HCT116 (cell line): ENCODE measurements at regions of chr11 and their contacts with region 1.

Region 1: GRCh38 chr11:57761301-57762234 is at the start of gene CTNND1:
- DNase-seq: peak; percentile 95
- ATAC-seq: peak; percentile 97
- H3K4me3 ChIP-seq: peak within 1 kb of the TSS; percentile 81 to 93
- H3K27ac ChIP-seq: peak within 1 kb of the TSS; percentile 83
- H3K4me1 ChIP-seq: peaks cover 15 to 28% of the 10 kb centered on the region in 2 experiments; a peak in 3 of 4 replicates
- H3K27me3 ChIP-seq: no peaks in the 10 kb centered on the region
- CTCF ChIP-seq: 0 out of 6 replicates have a peak, but pooled peaks of 1 of the 3 experiments have one; percentile 3
- POLR2A ChIP-seq: peak; percentile 78
- RAD21 ChIP-seq: peak; percentile 15
- total RNA-seq, gene CTNND1: 157 TPM

Region 2: DNA sequence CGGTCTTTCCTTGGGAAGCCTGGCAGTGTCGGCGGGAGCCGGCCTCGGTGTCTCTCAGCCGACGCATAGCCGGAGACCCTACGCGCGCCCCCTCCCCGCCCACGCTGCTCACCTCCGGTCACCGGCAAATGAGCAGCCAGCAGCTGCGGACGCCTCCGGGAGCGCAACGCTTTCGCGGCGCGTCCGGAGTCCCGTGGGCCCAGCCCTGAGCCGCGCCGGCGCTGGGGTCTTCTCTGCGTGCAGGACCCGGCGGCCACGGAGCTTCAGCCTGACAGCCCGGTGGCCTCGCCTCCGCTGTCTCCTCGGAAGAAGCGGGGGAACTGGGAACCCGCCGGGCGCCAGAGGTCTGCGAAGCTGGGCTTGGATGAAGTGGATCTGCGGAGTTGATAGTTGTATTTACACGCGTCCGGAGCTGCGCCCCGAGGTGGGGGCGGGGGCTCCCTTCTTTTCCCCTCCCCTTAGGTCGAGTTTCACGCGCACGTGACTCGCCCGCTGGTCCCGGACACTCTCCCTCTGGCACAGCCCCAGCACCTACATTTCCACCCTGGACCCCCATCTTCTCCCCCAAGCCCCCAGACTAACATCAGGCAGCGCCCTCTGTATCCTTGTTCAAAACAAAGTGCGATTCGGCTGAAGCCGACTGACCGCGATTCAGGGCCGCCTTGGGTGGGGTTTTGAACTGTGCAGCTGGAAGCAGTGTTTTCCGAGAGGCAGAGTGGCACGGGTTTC is 246.1 kb before region 1 on chr11 and contains the start of gene SLC43A1:
- CTCF ChIA-PET with region 1: no interaction called
- POLR2A ChIA-PET with region 1: no interaction called
- RAD21 ChIA-PET with region 1: no interaction called
- intact Hi-C with region 1: no loop called
- DNase-seq: no peak
- ATAC-seq: peak; percentile 84
- H3K4me3 ChIP-seq: peak within 1 kb of the TSS; percentile 70 to 73
- H3K27ac ChIP-seq: peak within 1 kb of the TSS; percentile 45; the same call in 1 of the 2 replicates
- H3K4me1 ChIP-seq: peaks cover 3 to 15% of the 10 kb centered on the region in 2 experiments; a peak in 3 of 4 replicates
- H3K27me3 ChIP-seq: no peaks in the 10 kb centered on the region
- CTCF ChIP-seq: no peak
- POLR2A ChIP-seq: peak; percentile 64
- RAD21 ChIP-seq: no peak
- total RNA-seq, gene SLC43A1: 11.8 TPM

Region 3: GRCh38 chr11:57778318-57779037 is 16.9 kb after region 1 on chr11:
- CTCF ChIA-PET with region 1: interaction called, 3 read pairs
- POLR2A ChIA-PET with region 1: interaction called, 22 read pairs
- RAD21 ChIA-PET with region 1: interaction called, 3 to 7 read pairs
- intact Hi-C with region 1: loop called (anchors 2 kb)
- DNase-seq: peak; percentile 89
- ATAC-seq: peak; percentile 81
- H3K4me3 ChIP-seq: peak overlapping the region; percentile 28 to 49
- H3K27ac ChIP-seq: peak overlapping the region; percentile 89
- H3K4me1 ChIP-seq: peaks cover 88 to 98% of the 10 kb centered on the region in 2 experiments
- H3K27me3 ChIP-seq: no peaks in the 10 kb centered on the region
- CTCF ChIP-seq: no peak
- POLR2A ChIP-seq: no peak
- RAD21 ChIP-seq: 0 out of 2 replicates have a peak, but pooled peaks have one; percentile 7